Sigmoid colon (tissue), 7 donors: ENCODE measurements at regions of chr4 and their contacts with region 1.

Region 1: GRCh38 chr4:127880764-127881562 is at the start of gene PLK4:
- DNase-seq: peak; percentile 97
- H3K4me3 ChIP-seq: peak within 1 kb of the TSS; percentile 49 to 81 (median 77)
- H3K27ac ChIP-seq: peak within 1 kb of the TSS; percentile 74 to 85 (median 79)
- H3K4me1 ChIP-seq: peaks cover 0 to 9% (median 8%) of the 10 kb centered on the region in 4 donors
- H3K27me3 ChIP-seq: no peaks in the 10 kb centered on the region
- CTCF ChIP-seq: no peak
- EP300 ChIP-seq: no peak
- POLR2A ChIP-seq: no peak
- total RNA-seq, gene PLK4: 0.16 to 1.7 (median 0.27) TPM in 3 of 4 donors, not detected in the other

Region 2: DNA sequence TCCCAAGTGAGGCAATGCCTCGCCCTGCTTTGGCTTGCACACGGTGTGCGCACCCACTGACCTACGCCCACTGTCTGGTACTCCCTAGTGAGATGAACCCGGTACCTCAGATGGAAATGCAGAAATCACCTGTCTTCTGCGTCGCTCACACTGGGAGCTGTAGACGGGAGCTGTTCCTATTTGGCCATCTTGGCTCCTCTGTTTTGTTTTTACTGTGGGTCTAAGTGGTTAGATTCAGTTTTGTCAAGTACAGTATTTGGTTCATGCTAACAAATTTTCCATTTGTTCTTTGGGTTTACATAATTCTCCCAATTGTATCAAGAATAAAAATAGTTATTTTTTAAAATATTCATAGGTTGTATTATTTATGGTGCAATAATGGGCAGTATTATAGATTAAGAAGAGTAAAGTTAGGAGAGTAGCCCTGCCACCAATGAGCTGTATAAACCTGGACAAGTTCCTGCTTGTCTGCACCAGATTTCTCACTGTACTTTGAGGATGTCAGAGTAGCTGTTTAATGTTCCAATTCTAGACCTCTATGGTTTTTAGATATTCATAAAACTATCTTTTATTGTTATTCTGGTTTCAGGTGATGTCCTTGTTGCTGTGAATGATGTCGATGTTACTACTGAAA is 224.8 kb before region 1 on chr4:
- intact Hi-C with region 1: no loop called
- DNase-seq: no peak
- H3K4me3 ChIP-seq: no peak overlapping the region
- H3K27ac ChIP-seq: no peak overlapping the region
- H3K4me1 ChIP-seq: no peaks in the 10 kb centered on the region
- H3K27me3 ChIP-seq: no peaks in the 10 kb centered on the region
- CTCF ChIP-seq: no peak
- EP300 ChIP-seq: no peak
- POLR2A ChIP-seq: no peak

Region 3: DNA sequence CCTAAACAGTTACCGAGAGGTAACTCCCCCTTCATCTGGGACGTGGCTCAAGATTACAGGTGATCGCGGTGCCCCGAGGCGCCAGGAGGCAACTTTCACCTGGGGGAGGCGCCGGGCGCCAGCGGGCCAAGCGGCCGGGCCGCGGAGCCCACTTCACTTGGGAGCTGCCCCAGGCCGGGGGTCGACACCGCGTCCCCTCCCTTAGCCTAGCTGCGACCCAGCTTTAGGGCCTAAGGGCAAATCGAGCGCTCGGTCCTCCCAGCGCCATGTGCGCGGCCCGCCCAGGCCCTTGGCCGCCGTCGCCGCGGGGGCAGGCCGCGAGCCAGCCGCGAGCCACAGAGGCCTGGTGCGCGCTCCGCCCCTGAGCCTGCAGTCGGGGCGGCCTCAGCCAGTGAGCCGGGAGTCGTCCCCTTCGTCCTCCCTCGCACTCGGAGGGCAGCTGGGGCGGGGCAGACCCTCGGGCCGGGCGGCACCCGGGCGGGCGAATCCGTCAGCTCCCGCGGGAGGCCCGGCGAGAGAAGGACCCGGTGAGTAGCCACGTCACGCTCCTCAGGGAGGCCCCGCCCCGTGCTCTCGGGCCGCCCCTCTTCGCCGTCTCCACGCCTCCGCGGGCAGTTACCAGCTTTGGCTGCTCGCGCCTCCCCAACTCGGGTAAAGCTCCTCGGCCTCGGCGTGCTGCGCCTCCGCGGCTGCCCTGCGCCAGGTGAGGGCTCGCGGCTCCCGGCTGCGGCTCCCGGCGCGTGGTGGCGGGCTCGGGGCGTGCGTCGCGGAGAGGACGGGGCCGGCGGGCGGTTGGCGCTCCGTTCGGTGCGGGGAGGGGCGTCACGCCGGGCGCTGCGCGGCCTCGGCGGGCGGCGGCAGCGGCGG is 180.0 kb after region 1 on chr4 and contains the start of gene LARP1B:
- intact Hi-C with region 1: loop called (anchors 10 kb)
- DNase-seq: peak; percentile 97
- H3K4me3 ChIP-seq: peak within 1 kb of the TSS; percentile 86 to 92 (median 88)
- H3K27ac ChIP-seq: peak within 1 kb of the TSS; percentile 98
- H3K4me1 ChIP-seq: peaks cover 0 to 28% (median 17%) of the 10 kb centered on the region in 4 donors
- H3K27me3 ChIP-seq: no peaks in the 10 kb centered on the region
- CTCF ChIP-seq: no peak
- EP300 ChIP-seq: no peak
- POLR2A ChIP-seq: peak; percentile 50 to 75
- total RNA-seq, gene LARP1B: 18.2 to 30.3 (median 20.3) TPM